ENCODE measurements at regions of chr19 and their contacts with region 1.

Region 1: DNA sequence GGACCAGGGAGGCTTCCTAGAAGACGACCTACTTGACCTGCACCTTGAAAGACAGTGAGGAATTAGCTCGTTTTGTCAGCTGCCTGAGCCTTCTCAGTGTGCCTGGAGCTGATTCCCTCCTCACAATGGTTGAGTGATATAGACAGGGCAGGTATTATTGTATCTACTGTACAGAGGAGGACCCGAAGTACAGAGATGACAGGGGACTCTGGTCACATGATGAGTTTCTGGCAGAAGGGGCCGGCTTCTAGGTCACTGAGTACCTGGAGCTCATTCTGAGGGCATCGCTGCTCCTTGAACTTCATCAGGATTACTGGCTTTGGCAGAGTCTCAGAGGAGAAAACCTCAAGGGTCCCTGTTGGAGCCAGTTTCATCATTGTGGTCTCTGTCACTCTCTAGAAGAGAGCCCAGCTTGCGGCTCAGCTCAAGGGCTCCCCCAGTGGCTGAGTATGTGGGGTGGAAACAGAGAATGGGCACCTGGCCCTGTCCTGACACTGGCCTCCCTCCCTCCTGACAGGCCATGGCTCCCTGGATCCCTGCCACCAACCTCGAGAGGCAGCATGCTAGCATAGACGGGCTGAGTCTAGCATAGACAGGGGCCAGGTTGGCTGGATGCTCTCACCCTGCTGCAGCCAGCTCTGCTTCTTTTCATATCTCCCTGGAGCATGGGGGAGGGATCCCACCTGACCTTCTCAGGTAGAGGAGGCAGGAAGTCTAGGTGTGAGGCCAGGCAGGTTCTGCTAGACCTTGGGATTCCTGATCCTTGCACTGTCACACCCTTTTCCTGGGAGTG is 38.7 kb downstream of the NFIX start:
- DNase-seq: peak; percentile 74
- ATAC-seq: peak; percentile 86
- H3K4me3 Mint-ChIP-seq: no peak overlapping the region
- H3K27ac Mint-ChIP-seq: no peak overlapping the region
- H3K4me1 Mint-ChIP-seq: peaks cover 2% of the 10 kb centered on the region
- H3K27me3 Mint-ChIP-seq: no peaks in the 10 kb centered on the region

Region 2: DNA sequence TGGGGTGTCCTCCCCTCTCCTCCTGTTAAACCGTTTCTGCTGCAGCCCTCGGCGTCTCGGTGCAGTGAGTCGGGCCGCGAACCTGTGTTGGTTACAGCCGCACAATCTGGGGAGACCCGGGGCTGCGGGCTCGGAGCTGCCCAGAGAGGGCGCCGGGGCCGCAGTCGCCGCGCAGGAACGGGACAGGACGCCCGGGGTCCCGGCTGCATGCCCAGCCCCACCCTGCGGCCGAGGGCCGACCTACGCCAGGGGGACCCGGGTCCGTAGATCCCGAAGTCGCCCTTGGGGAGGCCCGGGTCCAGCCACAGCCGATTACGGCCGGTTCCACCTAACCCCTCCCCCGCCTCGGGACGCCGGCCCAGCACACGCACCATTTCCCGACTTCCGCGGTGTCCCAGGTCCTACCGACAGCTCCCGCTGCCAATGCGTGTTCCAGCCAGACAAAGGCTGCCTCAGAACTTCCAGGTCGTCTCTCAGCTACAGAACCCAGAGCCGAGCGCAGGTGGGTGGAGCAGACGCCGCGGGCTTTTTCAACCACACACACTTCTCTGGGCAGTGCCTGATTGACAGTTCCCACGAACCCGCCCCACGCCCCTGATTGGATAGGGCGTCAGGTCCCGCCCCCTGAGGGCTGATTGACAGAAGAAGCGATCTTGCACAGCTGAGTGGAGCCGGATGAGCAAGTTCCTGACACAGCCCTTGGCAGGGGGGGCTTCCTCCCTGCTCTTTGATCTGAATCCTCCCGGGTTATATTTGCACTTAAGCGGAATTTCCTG is 593.3 kb before region 1 on chr19 and contains the start of gene ZNF443:
- CTCF ChIA-PET with region 1: no interaction called
- POLR2A ChIA-PET with region 1: no interaction called
- intact Hi-C with region 1: no loop called
- DNase-seq: peak; percentile 99
- ATAC-seq: peak; percentile 98
- H3K4me3 Mint-ChIP-seq: peak within 1 kb of the TSS; percentile 99
- H3K27ac Mint-ChIP-seq: peak within 1 kb of the TSS; percentile 99
- H3K4me1 Mint-ChIP-seq: peaks cover 10% of the 10 kb centered on the region
- H3K27me3 Mint-ChIP-seq: no peaks in the 10 kb centered on the region
- total RNA-seq, gene ZNF443: 3.4 to 4.0 TPM

Region 3: GRCh38 chr19:12703046-12703445 is 331.0 kb before region 1 on chr19:
- CTCF ChIA-PET with region 1: no interaction called
- POLR2A ChIA-PET with region 1: no interaction called
- intact Hi-C with region 1: no loop called
- DNase-seq: peak; percentile 44
- ATAC-seq: peak; percentile 74
- H3K4me3 Mint-ChIP-seq: no peak overlapping the region
- H3K27ac Mint-ChIP-seq: no peak overlapping the region
- H3K4me1 Mint-ChIP-seq: peaks cover 2% of the 10 kb centered on the region
- H3K27me3 Mint-ChIP-seq: no peaks in the 10 kb centered on the region

Region 4: GRCh38 chr19:12983542-12984142 is 50.4 kb before region 1 on chr19:
- CTCF ChIA-PET with region 1: interaction called, 27 read pairs
- POLR2A ChIA-PET with region 1: no interaction called
- intact Hi-C with region 1: loop called (anchors 1 to 5 kb)
- DNase-seq: peak; percentile 90
- ATAC-seq: peak; percentile 80
- H3K4me3 Mint-ChIP-seq: no peak overlapping the region
- H3K27ac Mint-ChIP-seq: no peak overlapping the region
- H3K4me1 Mint-ChIP-seq: no peaks in the 10 kb centered on the region
- H3K27me3 Mint-ChIP-seq: no peaks in the 10 kb centered on the region

Region 5: DNA sequence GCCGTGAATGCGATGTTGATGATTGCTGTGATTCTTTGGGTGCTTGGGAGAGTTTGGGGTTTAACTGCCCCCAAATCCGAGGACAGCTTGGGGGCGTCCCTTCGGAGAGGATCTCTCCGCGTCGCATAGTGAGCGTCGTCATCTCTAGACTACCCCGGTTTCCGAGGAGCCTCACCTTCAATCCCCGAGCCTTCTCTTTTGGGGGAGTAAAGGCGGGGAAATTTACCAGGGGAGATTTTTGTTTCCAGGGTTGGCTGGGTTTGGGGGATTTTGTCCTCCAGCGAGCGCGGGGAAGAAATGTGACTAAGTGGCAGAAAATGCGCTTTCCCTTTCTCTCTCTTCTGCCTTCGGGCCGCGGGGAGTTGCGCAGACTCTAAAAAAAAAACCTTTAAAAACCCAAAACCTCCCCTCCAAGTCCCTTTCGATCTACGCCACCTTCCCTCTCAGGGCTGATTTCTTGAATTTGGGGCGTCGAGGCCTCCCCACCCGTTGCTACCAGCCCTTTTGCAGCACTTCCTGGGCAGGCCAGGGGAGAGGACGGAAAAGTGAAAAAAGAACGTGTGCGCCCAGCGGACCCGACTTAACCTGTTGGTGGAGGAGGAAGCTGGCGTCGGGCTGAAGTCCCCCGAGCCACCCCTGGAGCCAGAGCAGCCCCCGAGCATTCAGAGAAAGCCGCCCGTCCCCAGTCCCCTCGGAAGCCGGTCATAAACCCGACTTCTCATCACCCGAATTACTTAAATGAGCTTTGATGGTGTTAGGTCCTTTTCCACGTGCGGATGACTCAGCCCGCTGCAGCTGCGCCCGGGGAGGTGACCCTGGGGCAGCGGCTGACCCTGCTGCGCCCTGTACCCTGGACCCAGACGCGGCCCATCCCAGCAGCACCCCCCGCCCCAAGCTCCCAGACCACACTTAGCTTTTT is 21.1 kb before region 1 on chr19:
- CTCF ChIA-PET with region 1: interaction called, 17 read pairs
- POLR2A ChIA-PET with region 1: no interaction called
- intact Hi-C with region 1: no loop called
- DNase-seq: peak; percentile 67
- ATAC-seq: peak; percentile 59
- H3K4me3 Mint-ChIP-seq: peak overlapping the region; percentile 72
- H3K27ac Mint-ChIP-seq: peak overlapping the region; percentile 79
- H3K4me1 Mint-ChIP-seq: peaks cover 22% of the 10 kb centered on the region
- H3K27me3 Mint-ChIP-seq: peaks cover 63% of the 10 kb centered on the region

Region 6: GRCh38 chr19:13314762-13315161 is 280.7 kb after region 1 on chr19:
- CTCF ChIA-PET with region 1: no interaction called
- POLR2A ChIA-PET with region 1: no interaction called
- intact Hi-C with region 1: no loop called
- DNase-seq: no peak
- ATAC-seq: no peak
- H3K4me3 Mint-ChIP-seq: no peak overlapping the region
- H3K27ac Mint-ChIP-seq: no peak overlapping the region
- H3K4me1 Mint-ChIP-seq: no peaks in the 10 kb centered on the region
- H3K27me3 Mint-ChIP-seq: peaks cover 18% of the 10 kb centered on the region

Measured in activated CD4-positive, alpha-beta T cell treated with anti-CD3 and anti-CD28 coated beads for 36 hours (primary cell).